ENCODE measurements at regions of chr12 and their contacts with region 1.

Region 1: DNA sequence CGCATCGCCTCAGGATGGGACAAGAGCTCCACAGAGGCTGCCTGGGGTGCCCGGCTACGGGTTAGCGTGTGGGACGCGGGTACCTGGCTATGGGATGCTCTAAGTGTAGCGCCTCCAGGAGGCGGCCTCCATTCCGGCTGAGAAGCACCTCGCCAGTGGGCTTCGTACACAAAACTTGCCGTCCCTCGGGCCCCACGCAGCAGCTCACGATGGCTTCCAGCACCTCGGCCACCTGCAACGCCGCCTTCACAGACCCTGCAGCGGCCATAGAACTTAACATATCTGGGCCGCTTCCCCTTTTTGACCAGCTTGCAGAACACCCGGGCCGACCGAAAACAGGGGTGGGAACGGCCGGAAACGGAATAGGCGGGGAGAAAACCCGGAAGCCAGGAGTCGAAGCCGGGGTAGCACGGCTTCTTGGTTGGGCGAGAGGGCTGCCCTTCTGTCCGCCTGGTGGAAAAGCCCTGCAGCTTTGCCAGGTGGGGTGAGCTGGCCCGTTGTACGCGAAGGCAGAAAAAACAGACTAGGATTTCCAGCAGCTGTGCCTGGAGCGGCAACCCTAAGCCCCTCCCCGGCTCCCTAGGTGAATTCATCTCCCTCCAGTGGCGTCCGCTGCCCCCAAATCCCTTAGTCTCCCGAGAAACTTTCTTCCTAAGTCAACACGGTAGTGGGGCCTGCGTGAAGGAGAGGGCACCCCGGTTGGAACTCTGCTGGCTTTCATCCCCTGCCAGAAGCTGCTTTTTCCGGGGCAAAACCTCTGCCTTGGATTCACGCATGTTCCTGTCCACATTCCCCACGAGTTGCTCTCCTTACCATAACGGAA is at the start of gene BBS10:
- DNase-seq: peak; percentile 92
- H3K4me3 Mint-ChIP-seq: peak within 1 kb of the TSS; percentile 92
- H3K27ac Mint-ChIP-seq: peak within 1 kb of the TSS; percentile 90
- H3K4me1 Mint-ChIP-seq: peaks cover 34% of the 10 kb centered on the region
- H3K27me3 Mint-ChIP-seq: no peaks in the 10 kb centered on the region

Region 2: GRCh38 chr12:76284816-76285750 is 63.2 kb before region 1 on chr12:
- CTCF ChIA-PET with region 1: no interaction called
- DNase-seq: no peak
- H3K4me3 Mint-ChIP-seq: no peak overlapping the region
- H3K27ac Mint-ChIP-seq: no peak overlapping the region
- H3K4me1 Mint-ChIP-seq: no peaks in the 10 kb centered on the region
- H3K27me3 Mint-ChIP-seq: peaks cover 4% of the 10 kb centered on the region

Region 3: GRCh38 chr12:76455582-76456345 is 107.5 kb after region 1 on chr12:
- CTCF ChIA-PET with region 1: interaction called, 17 read pairs
- DNase-seq: peak; percentile 27
- H3K4me3 Mint-ChIP-seq: no peak overlapping the region
- H3K27ac Mint-ChIP-seq: no peak overlapping the region
- H3K4me1 Mint-ChIP-seq: peaks cover 4% of the 10 kb centered on the region
- H3K27me3 Mint-ChIP-seq: no peaks in the 10 kb centered on the region